Activated CD4-positive, alpha-beta memory T cell treated with anti-CD3 and anti-CD28 coated beads for 36 hours (primary cell): ENCODE measurements at regions of chr3 and their contacts with region 1.

Region 1: GRCh38 chr3:114213627-114214541 is 23.5 kb downstream of the ZNF80 start:
- DNase-seq: peak; percentile 89
- H3K4me3 Mint-ChIP-seq: no peak overlapping the region
- H3K27ac Mint-ChIP-seq: no peak overlapping the region
- H3K4me1 Mint-ChIP-seq: peaks cover 4% of the 10 kb centered on the region
- H3K27me3 Mint-ChIP-seq: no peaks in the 10 kb centered on the region

Region 2: GRCh38 chr3:114152519-114153151 is 61.2 kb before region 1 on chr3:
- CTCF ChIA-PET with region 1: interaction called, 4 read pairs
- POLR2A ChIA-PET with region 1: no interaction called
- intact Hi-C with region 1: loop called (anchors 1 kb)
- DNase-seq: peak; percentile 90
- H3K4me3 Mint-ChIP-seq: peak overlapping the region; percentile 25
- H3K27ac Mint-ChIP-seq: peak overlapping the region; percentile 18
- H3K4me1 Mint-ChIP-seq: peaks cover 8% of the 10 kb centered on the region
- H3K27me3 Mint-ChIP-seq: no peaks in the 10 kb centered on the region

Region 3: DNA sequence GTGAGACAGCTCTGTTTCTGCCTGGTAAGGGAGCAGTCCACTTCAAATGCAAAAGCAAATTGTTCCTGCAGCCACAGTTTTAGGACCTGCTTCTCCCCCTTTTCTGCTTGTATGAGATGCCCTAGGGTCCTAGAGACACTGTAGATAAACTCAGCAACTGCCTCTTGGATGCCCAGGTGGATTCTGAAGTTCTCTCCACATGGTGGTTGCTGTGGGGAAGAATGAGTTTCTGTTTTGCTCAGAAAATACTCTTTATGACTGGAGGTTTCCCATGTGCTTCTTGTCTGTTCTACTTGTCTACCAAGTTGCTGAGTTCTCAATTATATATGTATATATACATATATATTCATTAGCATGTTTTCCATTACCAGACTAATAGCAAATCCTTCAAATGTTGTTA is 29.1 kb after region 1 on chr3:
- CTCF ChIA-PET with region 1: interaction called, 5 read pairs
- POLR2A ChIA-PET with region 1: interaction called, 8 read pairs
- intact Hi-C with region 1: loop called (anchors 1 kb)
- DNase-seq: peak; percentile 49
- H3K4me3 Mint-ChIP-seq: no peak overlapping the region
- H3K27ac Mint-ChIP-seq: no peak overlapping the region
- H3K4me1 Mint-ChIP-seq: peaks cover 22% of the 10 kb centered on the region
- H3K27me3 Mint-ChIP-seq: no peaks in the 10 kb centered on the region

Region 4: GRCh38 chr3:114308830-114309229 is 94.9 kb after region 1 on chr3:
- CTCF ChIA-PET with region 1: interaction called, 7 read pairs
- POLR2A ChIA-PET with region 1: interaction called, 24 read pairs
- intact Hi-C with region 1: loop called (anchors 1 kb)
- DNase-seq: peak; percentile 83
- H3K4me3 Mint-ChIP-seq: peak overlapping the region; percentile 70
- H3K27ac Mint-ChIP-seq: peak overlapping the region; percentile 99
- H3K4me1 Mint-ChIP-seq: peaks cover 77% of the 10 kb centered on the region
- H3K27me3 Mint-ChIP-seq: no peaks in the 10 kb centered on the region

Region 5: DNA sequence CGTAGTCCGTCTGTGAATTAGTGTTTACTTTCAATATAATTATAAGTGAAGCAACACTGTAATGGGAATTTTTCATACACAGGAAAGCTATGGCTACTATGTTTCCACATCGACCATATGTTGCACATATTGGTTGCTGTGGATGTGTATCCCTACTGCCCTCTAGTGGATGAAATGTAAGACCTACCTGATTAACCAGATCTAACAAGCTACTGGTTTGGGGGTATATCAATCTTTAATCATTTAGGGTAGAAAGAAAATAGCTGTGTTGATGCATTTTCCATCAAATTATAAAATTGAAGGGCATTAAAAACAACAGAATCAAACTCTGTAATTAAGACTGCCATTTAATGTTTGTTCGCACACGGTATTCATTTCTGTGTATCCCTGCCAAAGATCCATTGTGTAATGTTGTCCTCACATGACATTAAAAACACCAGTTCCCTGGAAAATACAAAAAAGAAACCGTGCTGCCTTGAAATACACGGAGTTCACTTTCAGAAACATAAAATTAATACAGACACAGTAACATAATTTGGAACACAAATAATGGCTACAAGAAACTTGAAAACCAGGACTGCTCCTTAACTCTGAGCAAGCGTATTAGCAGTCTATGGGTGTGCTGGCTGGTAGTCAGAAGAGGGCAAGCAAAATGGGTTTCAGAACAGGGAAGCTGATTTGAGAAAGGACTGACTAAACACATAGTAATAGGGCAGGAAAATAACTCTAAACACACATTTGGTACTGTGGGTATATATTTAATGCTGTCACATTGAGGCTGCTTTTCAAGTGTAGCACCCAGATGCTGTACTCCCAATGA is 205.1 kb after region 1 on chr3:
- CTCF ChIA-PET with region 1: interaction called, 6 read pairs
- POLR2A ChIA-PET with region 1: no interaction called
- intact Hi-C with region 1: loop called (anchors 1 kb)
- DNase-seq: no peak
- H3K4me3 Mint-ChIP-seq: peak overlapping the region; percentile 54
- H3K27ac Mint-ChIP-seq: peak overlapping the region; percentile 61
- H3K4me1 Mint-ChIP-seq: peaks cover 28% of the 10 kb centered on the region
- H3K27me3 Mint-ChIP-seq: no peaks in the 10 kb centered on the region

Region 6: GRCh38 chr3:115790759-115791158 is 1576.9 kb after region 1 on chr3:
- CTCF ChIA-PET with region 1: no interaction called
- POLR2A ChIA-PET with region 1: no interaction called
- intact Hi-C with region 1: loop called (anchors 2 kb)
- DNase-seq: peak; percentile 76
- H3K4me3 Mint-ChIP-seq: no peak overlapping the region
- H3K27ac Mint-ChIP-seq: no peak overlapping the region
- H3K4me1 Mint-ChIP-seq: peaks cover 31% of the 10 kb centered on the region
- H3K27me3 Mint-ChIP-seq: no peaks in the 10 kb centered on the region